ENCODE measurements at regions of chr10 and their contacts with region 1.

Region 1: GRCh38 chr10:131885391-131886161 is 15.2 kb upstream of the PPP2R2D start:
- DNase-seq: peak; percentile 86
- H3K4me3 Mint-ChIP-seq: no peak overlapping the region
- H3K27ac Mint-ChIP-seq: no peak overlapping the region
- H3K4me1 Mint-ChIP-seq: peaks cover 13% of the 10 kb centered on the region
- H3K27me3 Mint-ChIP-seq: no peaks in the 10 kb centered on the region

Region 2: GRCh38 chr10:131900350-131901146 is 15.0 kb after region 1 on chr10 and contains the start of gene PPP2R2D:
- CTCF ChIA-PET with region 1: interaction called, 16 read pairs
- intact Hi-C with region 1: loop called (anchors 2 kb)
- DNase-seq: peak; percentile 94
- H3K4me3 Mint-ChIP-seq: peak within 1 kb of the TSS; percentile 87
- H3K27ac Mint-ChIP-seq: peak within 1 kb of the TSS; percentile 92
- H3K4me1 Mint-ChIP-seq: peaks cover 47% of the 10 kb centered on the region
- H3K27me3 Mint-ChIP-seq: peaks cover 4% of the 10 kb centered on the region
- total RNA-seq, gene PPP2R2D: 31.5 to 34.7 TPM

Region 3: GRCh38 chr10:131943021-131943814 is 57.6 kb after region 1 on chr10:
- CTCF ChIA-PET with region 1: interaction called, 17 read pairs
- intact Hi-C with region 1: loop called (anchors 1 kb)
- DNase-seq: peak; percentile 47
- H3K4me3 Mint-ChIP-seq: no peak overlapping the region
- H3K27ac Mint-ChIP-seq: peak overlapping the region; percentile 36
- H3K4me1 Mint-ChIP-seq: peaks cover 2% of the 10 kb centered on the region
- H3K27me3 Mint-ChIP-seq: no peaks in the 10 kb centered on the region

Region 4: GRCh38 chr10:132023092-132023811 is 137.7 kb after region 1 on chr10:
- CTCF ChIA-PET with region 1: interaction called, 94 read pairs
- intact Hi-C with region 1: loop called (anchors 1 kb)
- DNase-seq: peak; percentile 86
- H3K4me3 Mint-ChIP-seq: no peak overlapping the region
- H3K27ac Mint-ChIP-seq: no peak overlapping the region
- H3K4me1 Mint-ChIP-seq: peaks cover 9% of the 10 kb centered on the region
- H3K27me3 Mint-ChIP-seq: peaks cover 22% of the 10 kb centered on the region

Region 5: DNA sequence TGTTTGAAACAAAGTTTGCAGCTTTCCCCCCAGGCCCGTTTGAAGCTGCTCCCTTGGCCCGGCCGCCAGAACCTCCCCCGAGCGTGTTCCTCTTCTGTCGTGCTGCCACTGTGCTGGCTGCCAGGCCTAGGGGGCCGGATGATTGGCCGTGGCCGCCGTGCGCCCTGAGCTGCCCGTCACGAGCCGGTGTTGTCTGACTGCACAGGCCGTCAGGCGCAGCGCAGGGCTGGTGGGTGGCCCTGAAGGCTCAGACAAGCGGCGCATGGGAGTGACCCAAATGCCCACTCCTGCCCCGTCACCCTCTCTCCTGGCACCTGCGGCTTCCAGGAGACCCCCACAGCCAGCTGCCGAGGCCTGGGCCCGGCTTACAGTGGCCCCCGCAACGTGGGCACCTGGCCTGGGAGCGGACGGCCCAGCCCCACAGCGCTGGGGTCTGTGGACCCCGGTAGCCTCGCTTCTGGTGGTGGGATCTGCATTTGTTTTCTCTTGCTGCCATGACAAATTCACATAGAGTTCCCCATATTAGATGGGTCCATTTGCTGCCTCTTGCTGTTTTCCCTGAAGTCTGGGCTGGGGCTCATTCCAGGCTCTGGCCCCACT is 193.3 kb after region 1 on chr10:
- CTCF ChIA-PET with region 1: no interaction called
- intact Hi-C with region 1: no loop called
- DNase-seq: no peak
- H3K4me3 Mint-ChIP-seq: no peak overlapping the region
- H3K27ac Mint-ChIP-seq: no peak overlapping the region
- H3K4me1 Mint-ChIP-seq: no peaks in the 10 kb centered on the region
- H3K27me3 Mint-ChIP-seq: peaks cover 13% of the 10 kb centered on the region

Region 6: GRCh38 chr10:132158122-132158741 is 272.7 kb after region 1 on chr10:
- CTCF ChIA-PET with region 1: interaction called, 3 read pairs
- intact Hi-C with region 1: loop called (anchors 5 kb)
- DNase-seq: peak; percentile 46
- H3K4me3 Mint-ChIP-seq: peak overlapping the region; percentile 7
- H3K27ac Mint-ChIP-seq: peak overlapping the region; percentile 67
- H3K4me1 Mint-ChIP-seq: peaks cover 26% of the 10 kb centered on the region
- H3K27me3 Mint-ChIP-seq: no peaks in the 10 kb centered on the region

Measured in activated naive CD4-positive, alpha-beta T cell treated with anti-CD3 and anti-CD28 coated beads for 36 hours (primary cell).